ENCODE measurements at regions of chr12 and their contacts with region 1.

Region 1: GRCh38 chr12:107317751-107318613 is 224.6 kb upstream of the CRY1 start:
- DNase-seq: peak; percentile 86
- H3K4me3 Mint-ChIP-seq: peak overlapping the region; percentile 85
- H3K27ac Mint-ChIP-seq: peak overlapping the region; percentile 30
- H3K4me1 Mint-ChIP-seq: peaks cover 32% of the 10 kb centered on the region
- H3K27me3 Mint-ChIP-seq: peaks cover 19% of the 10 kb centered on the region

Region 2: GRCh38 chr12:106302401-106303201 is 1015.4 kb before region 1 on chr12 and contains the start of gene TCP11L2:
- intact Hi-C with region 1: loop called (anchors 2 kb)
- DNase-seq: peak; percentile 83
- H3K4me3 Mint-ChIP-seq: peak within 1 kb of the TSS; percentile 93
- H3K27ac Mint-ChIP-seq: peak within 1 kb of the TSS; percentile 100
- H3K4me1 Mint-ChIP-seq: peaks cover 49% of the 10 kb centered on the region
- H3K27me3 Mint-ChIP-seq: no peaks in the 10 kb centered on the region
- total RNA-seq, gene TCP11L2: 4.0 and 4.3 TPM in 2 replicates

Region 3: DNA sequence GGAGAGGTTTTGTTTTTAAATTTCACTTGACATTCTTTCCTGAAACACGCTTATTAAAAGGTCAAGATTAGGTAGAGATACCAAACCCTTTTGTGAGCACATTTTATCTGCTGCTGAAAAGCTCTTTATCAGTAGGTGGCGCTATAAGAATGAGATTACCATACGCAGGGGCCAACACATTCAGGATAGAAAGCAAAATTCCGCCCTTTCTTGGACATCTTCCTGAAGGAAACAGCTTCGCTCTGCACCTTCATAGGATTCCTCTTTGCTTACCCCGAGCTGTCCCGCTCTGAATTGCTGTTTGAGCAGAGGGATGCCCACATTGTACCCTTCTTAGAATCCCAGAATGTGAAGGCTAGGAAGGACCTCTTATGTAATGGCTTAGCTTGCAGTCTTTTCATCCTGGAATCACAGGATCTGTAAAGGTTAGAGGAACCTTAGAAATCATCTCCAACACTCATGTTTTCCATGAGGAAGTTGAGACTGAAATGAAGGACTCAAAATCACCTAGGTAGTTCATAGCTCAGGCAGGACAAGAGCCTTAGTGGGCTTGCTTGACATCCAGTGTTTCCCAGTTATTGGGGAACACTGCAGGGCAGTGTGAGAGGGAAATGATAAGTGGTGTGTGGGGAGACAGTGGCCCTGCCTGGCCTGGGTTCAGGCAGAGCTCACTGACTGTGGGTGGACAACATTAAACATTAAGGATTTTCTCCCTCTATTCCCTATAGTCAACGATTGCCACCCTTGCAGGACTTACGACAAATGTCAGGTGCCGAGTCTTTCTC is 186.0 kb before region 1 on chr12:
- intact Hi-C with region 1: loop called (anchors 2 kb)
- DNase-seq: peak; percentile 6
- H3K4me3 Mint-ChIP-seq: no peak overlapping the region
- H3K27ac Mint-ChIP-seq: no peak overlapping the region
- H3K4me1 Mint-ChIP-seq: no peaks in the 10 kb centered on the region
- H3K27me3 Mint-ChIP-seq: no peaks in the 10 kb centered on the region

Region 4: DNA sequence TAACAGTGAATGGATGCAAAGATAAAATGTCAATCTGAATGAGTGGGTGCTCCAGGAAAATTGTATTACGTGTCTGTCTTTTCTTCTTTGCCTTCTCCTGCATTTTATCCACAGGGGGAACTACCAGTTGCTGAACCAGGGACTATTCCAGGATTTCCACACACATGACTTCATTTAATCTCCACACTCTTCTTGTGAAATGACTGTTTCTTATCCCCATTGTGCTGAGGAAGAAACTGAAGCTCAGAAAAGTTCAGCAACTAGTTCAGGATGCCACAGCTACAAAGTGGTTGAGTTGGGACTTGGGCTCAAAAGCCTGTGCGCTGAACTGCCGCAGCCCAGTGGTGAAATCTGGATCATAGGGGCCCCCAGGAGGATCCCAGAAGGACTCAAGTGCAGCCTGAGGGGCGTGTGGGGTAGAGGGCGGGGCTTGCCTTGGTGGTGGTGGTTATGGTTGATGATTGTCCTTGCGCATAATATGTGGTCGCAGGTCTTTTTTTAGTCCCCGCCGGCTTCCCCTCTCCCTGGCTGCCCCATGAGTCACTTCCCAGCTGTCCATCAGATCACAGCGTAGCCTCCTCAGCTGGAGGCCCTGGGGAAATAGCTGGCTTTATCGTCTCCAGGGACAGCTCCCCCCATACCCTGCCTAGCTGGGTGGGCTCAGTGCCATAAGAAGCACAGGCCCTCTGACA is 10.6 kb after region 1 on chr12:
- intact Hi-C with region 1: loop called (anchors 1 kb)
- DNase-seq: no peak
- H3K4me3 Mint-ChIP-seq: no peak overlapping the region
- H3K27ac Mint-ChIP-seq: no peak overlapping the region
- H3K4me1 Mint-ChIP-seq: peaks cover 83% of the 10 kb centered on the region
- H3K27me3 Mint-ChIP-seq: no peaks in the 10 kb centered on the region

Region 5: GRCh38 chr12:107372229-107372658 is 54.3 kb after region 1 on chr12:
- intact Hi-C with region 1: loop called (anchors 1 kb)
- DNase-seq: peak; percentile 42
- H3K4me3 Mint-ChIP-seq: peak overlapping the region; percentile 52
- H3K27ac Mint-ChIP-seq: peak overlapping the region; percentile 87
- H3K4me1 Mint-ChIP-seq: peaks cover 75% of the 10 kb centered on the region
- H3K27me3 Mint-ChIP-seq: no peaks in the 10 kb centered on the region

Region 6: DNA sequence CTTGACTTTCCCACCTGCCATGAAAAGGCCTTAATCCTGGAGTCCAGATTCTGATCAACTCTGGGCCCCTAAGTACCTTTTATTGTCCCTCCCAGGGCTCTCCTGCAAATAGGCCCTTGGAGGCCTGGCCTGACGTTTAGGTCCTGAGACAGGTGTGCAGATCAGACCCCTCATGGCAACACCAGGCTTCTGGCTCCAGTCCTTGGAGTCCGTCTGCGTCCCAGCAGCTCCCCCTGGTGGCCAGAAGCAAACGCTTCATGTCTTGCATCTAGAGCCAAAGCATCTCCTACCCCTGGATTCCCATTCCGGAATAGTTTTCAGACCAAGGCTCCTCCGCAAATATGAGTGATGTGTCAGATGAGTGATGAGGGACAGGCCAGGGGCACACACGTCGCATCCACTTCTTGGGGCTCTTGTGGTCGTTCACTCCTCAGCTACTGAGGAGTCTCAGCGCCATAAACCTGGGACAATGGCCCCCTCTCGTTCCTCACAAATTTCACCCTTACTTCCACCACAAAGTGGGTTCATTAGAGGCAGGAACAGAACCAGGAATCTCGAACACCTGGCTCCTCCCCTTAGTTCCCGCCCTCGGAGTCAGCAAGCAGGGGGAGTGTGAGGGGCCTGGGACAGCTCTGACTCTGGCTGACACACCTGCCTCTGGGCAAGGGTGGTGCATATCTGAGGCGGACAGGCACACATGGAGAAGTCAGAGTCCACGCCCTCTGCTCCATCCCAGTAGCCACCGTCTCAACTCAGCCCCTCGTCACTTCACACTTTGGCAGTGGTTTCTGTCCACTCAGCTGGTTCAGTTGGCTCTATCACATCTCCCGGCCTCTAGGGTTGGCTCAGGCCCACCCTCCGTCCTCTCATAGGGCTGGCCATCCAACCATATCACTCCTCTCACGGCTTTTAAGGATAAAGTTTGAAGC is 289.7 kb after region 1 on chr12:
- intact Hi-C with region 1: loop called (anchors 1 kb)
- DNase-seq: peak; percentile 55
- H3K4me3 Mint-ChIP-seq: no peak overlapping the region
- H3K27ac Mint-ChIP-seq: no peak overlapping the region
- H3K4me1 Mint-ChIP-seq: no peaks in the 10 kb centered on the region
- H3K27me3 Mint-ChIP-seq: no peaks in the 10 kb centered on the region

Region 7: GRCh38 chr12:107760809-107761501 is 443.0 kb after region 1 on chr12 and contains the start of gene PRDM4:
- intact Hi-C with region 1: loop called (anchors 5 kb)
- DNase-seq: peak; percentile 91
- H3K4me3 Mint-ChIP-seq: peak within 1 kb of the TSS; percentile 92
- H3K27ac Mint-ChIP-seq: peak within 1 kb of the TSS; percentile 89
- H3K4me1 Mint-ChIP-seq: peaks cover 40% of the 10 kb centered on the region
- H3K27me3 Mint-ChIP-seq: peaks cover 3% of the 10 kb centered on the region
- total RNA-seq, gene PRDM4: 28.1 and 30.2 TPM in 2 replicates

Region 8: GRCh38 chr12:108004319-108004718 is 686.3 kb after region 1 on chr12:
- intact Hi-C with region 1: no loop called
- DNase-seq: no peak
- H3K4me3 Mint-ChIP-seq: no peak overlapping the region
- H3K27ac Mint-ChIP-seq: no peak overlapping the region
- H3K4me1 Mint-ChIP-seq: no peaks in the 10 kb centered on the region
- H3K27me3 Mint-ChIP-seq: no peaks in the 10 kb centered on the region

Measured in activated T-helper 1 cell treated with anti-CD3 and anti-CD28 coated beads, Interleukin-12 subunit alpha, Interleukin-12 subunit beta, Interleukin-2, Interleukin-4 antibody, amounts not matched to agents 30 ng/mL and 10 ng/mL and 1 ng/mL, durations not matched to agents 14 hours and 24 hours and 36 hours (primary cell).